ENCODE measurements at regions of chr10 and their contacts with region 1.

Region 1: DNA sequence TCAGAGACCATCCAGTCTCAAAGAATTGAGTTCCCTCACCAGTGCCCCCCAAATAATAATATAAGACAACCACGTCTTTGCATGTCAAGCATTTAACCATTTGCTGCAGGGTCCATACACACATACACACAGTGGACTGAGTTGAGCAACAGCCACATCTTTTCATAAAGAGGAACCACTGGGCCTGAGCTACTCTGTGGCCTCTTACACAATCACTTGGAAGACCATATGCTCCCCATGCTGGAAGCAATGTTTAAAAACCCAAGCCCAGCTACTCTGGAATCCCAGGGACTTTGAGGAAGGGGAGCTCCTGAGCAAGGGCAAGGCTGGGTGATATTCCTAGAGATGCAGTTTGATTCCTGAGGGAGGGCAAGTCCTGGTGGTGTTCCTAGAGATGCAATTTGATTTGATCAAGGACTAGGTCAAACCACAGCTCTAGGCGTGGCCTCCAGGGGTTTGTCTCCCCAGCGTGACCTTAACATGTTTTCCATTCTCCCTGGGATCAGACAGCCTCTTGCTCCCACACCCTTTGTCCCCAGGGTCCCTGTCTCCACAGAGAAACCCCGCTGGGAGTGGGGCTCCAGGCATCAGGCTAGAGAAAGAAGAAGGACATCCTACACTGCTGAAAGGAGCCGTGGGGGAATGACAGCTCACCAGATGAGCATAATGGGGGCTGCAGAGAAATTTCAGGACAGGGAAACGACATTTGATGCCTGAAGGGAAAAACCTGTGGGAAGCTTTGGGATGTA is 376.2 kb upstream of the MGMT start:
- DNase-seq: no peak
- ATAC-seq: no peak
- H3K4me3 ChIP-seq: no peak overlapping the region
- H3K27ac ChIP-seq: no peak overlapping the region
- H3K4me1 ChIP-seq: no peaks in the 10 kb centered on the region
- H3K27me3 ChIP-seq: peaks cover 0 to 4% of the 10 kb centered on the region in 2 experiments; a peak in 1 of 5 replicates
- CTCF ChIP-seq: no peak
- EP300 ChIP-seq: no peak
- POLR2A ChIP-seq: no peak
- RAD21 ChIP-seq: no peak

Region 2: DNA sequence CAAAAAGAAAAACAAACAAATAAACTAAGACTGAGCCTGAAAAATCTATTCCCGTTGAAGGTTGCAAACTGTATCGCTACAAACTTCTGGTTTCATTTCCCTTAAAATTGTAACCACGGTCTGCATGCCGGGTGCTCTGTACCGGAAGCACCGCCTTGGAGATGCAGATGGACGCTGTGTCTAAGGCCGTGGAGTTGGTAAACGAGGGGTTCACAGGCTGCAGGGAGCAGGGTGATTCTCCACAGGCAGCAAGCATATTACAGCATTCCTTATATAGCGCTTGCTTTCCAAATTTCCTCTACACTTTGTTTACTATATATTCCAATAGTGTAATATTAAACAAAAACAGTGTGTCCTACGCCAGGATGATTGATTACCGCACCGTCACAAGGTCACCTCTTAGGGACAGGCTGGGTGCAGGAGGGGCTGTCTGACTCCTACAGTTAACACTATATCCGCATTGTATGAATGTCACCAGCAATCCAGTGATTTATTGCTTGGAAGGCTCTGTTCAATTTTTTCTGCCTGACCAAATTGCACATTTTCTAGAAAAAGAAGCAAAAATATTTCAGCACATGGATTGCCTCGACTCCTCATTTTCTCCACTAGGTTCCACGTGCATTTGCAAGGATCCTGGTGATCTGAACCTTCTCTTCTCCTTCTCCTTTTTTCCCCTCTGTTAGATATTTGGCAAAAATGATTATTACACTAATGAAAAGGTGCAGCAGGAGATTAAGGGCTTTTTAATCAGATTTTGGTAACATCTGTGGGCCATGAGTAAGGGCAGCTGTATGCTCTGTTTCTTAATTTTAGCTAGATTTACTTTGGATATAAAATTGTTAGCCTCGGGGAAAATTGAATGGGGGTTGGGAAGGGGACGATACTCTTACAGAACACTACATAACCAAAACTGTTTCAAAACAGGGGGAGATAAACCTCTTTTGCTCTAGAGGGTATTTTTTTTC is 50.4 kb after region 1 on chr10:
- CTCF ChIA-PET with region 1: no interaction called
- POLR2A ChIA-PET with region 1: no interaction called
- in situ Hi-C with region 1: loop called (anchors 5 kb)
- intact Hi-C with region 1: no loop called
- DNase-seq: no peak
- ATAC-seq: no peak
- H3K4me3 ChIP-seq: no peak overlapping the region
- H3K27ac ChIP-seq: no peak overlapping the region
- H3K4me1 ChIP-seq: no peaks in the 10 kb centered on the region
- H3K27me3 ChIP-seq: peaks cover 4 to 13% of the 10 kb centered on the region in 2 experiments; a peak in 3 of 5 replicates
- CTCF ChIP-seq: no peak
- EP300 ChIP-seq: no peak
- POLR2A ChIP-seq: no peak
- RAD21 ChIP-seq: no peak